Activated CD8-positive, alpha-beta memory T cell treated with anti-CD3 and anti-CD28 coated beads, Interleukin-2, amount 10 ng/mL, durations not matched to agents 7 days and 5 days (primary cell): ENCODE measurements at regions of chr19 and their contacts with region 1.

Region 1: DNA sequence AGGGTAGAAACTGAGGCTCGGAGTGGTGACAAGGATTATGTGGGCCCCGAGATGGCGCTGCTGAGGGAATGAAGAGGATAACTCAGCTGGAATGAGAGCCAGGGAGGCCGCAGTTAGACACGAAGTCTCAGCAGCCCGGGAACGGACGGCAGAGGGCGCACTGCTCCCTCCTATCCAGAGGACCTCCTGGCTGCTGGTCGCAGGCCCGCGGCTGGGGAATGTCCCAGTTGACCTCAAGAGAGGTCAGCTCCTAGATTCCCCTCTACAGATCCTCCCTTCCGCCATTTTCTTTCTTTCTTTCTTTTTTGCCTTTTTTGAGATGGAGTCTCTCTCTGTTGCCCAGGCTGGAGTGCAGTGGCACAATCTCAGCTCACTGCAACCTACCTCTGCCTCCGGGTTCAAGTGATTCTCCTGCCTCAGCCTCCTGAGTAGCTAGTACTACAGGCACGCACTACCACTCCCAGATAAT is 24.1 kb upstream of the ASPDH start:
- DNase-seq: peak; percentile 71
- ATAC-seq: peak; percentile 57
- H3K4me3 Mint-ChIP-seq: no peak overlapping the region
- H3K27ac Mint-ChIP-seq: no peak overlapping the region
- H3K4me1 Mint-ChIP-seq: no peaks in the 10 kb centered on the region
- H3K27me3 Mint-ChIP-seq: no peaks in the 10 kb centered on the region

Region 2: GRCh38 chr19:50556282-50557008 is 18.6 kb after region 1 on chr19:
- CTCF ChIA-PET with region 1: interaction called, 48 read pairs
- DNase-seq: peak; percentile 84
- ATAC-seq: peak; percentile 90
- H3K4me3 Mint-ChIP-seq: peak overlapping the region; percentile 82
- H3K27ac Mint-ChIP-seq: peak overlapping the region; percentile 65
- H3K4me1 Mint-ChIP-seq: peaks cover 4% of the 10 kb centered on the region
- H3K27me3 Mint-ChIP-seq: peaks cover 32% of the 10 kb centered on the region